Esophagus squamous epithelium (tissue), 5 donors: ENCODE measurements at regions of chr3 and their contacts with region 1.

Region 1: GRCh38 chr3:11060500-11061251 is 68.1 kb downstream of the SLC6A1 start:
- DNase-seq: no peak
- H3K4me3 ChIP-seq: peak overlapping the region in 2 of 4 donors; percentile 16 to 56
- H3K27ac ChIP-seq: no peak overlapping the region
- H3K4me1 ChIP-seq: peaks cover 0 to 18% (median 7%) of the 10 kb centered on the region in 3 donors
- H3K27me3 ChIP-seq: peaks cover 0 to 34% (median 0%) of the 10 kb centered on the region in 4 donors
- CTCF ChIP-seq: peak; percentile 55 to 94 (median 85)
- POLR2A ChIP-seq: no peak

Region 2: GRCh38 chr3:10722911-10723310 is 337.8 kb before region 1 on chr3:
- intact Hi-C with region 1: no loop called
- DNase-seq: no peak
- H3K4me3 ChIP-seq: no peak overlapping the region
- H3K27ac ChIP-seq: no peak overlapping the region
- H3K4me1 ChIP-seq: no peaks in the 10 kb centered on the region
- H3K27me3 ChIP-seq: peaks cover 0 to 50% (median 0%) of the 10 kb centered on the region in 4 donors
- CTCF ChIP-seq: no peak
- POLR2A ChIP-seq: no peak

Region 3: DNA sequence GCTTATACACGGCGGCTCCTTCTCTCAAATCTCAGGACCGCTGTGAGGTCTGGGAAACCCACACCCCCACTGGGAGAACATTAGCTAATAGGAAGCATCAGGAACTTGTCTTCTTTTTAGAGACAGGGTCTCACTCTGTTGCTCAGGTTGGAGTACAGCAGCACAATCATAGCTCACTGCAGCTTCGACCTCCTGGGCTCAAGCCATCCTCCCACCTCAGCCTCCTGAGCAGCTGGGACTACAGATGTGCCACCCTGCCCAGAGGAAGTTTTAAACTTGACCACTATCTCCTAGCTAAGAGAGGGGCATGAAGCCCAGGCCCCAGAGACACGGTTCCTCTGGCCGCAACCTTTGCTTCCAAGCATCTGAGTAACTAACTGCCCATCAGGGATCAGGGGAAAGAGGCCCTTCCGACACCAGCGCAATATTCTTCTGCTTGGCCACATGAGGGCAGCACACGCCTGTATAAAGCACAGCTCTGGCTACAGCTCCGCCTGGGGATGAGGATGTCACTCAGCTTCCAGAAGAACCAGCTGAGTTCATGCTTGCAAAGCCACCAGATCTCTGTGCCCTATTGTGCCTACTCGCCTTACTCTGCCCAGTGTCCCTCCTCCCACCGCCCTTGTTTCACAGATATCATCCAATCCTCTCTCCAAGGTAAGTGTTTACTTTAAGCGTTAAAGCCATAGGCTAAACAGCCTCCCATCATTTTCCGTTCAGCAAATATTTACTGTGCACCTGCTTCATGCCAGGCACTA is 302.2 kb before region 1 on chr3:
- intact Hi-C with region 1: loop called (anchors 5 kb)
- DNase-seq: no peak
- H3K4me3 ChIP-seq: no peak overlapping the region
- H3K27ac ChIP-seq: no peak overlapping the region
- H3K4me1 ChIP-seq: peaks cover 0 to 6% (median 0%) of the 10 kb centered on the region in 3 donors
- H3K27me3 ChIP-seq: peaks cover 0 to 94% (median 0%) of the 10 kb centered on the region in 4 donors
- CTCF ChIP-seq: peak in 5 of 6 experiments; percentile 58 to 88 (median 72)
- POLR2A ChIP-seq: no peak

Region 4: GRCh38 chr3:10945683-10946287 is 114.9 kb before region 1 on chr3:
- intact Hi-C with region 1: loop called (anchors 5 kb)
- DNase-seq: no peak
- H3K4me3 ChIP-seq: no peak overlapping the region
- H3K27ac ChIP-seq: no peak overlapping the region
- H3K4me1 ChIP-seq: peaks cover 0 to 4% (median 0%) of the 10 kb centered on the region in 3 donors
- H3K27me3 ChIP-seq: peaks cover 0 to 27% (median 0%) of the 10 kb centered on the region in 4 donors
- CTCF ChIP-seq: peak; percentile 66 to 87 (median 80)
- POLR2A ChIP-seq: no peak

Region 5: DNA sequence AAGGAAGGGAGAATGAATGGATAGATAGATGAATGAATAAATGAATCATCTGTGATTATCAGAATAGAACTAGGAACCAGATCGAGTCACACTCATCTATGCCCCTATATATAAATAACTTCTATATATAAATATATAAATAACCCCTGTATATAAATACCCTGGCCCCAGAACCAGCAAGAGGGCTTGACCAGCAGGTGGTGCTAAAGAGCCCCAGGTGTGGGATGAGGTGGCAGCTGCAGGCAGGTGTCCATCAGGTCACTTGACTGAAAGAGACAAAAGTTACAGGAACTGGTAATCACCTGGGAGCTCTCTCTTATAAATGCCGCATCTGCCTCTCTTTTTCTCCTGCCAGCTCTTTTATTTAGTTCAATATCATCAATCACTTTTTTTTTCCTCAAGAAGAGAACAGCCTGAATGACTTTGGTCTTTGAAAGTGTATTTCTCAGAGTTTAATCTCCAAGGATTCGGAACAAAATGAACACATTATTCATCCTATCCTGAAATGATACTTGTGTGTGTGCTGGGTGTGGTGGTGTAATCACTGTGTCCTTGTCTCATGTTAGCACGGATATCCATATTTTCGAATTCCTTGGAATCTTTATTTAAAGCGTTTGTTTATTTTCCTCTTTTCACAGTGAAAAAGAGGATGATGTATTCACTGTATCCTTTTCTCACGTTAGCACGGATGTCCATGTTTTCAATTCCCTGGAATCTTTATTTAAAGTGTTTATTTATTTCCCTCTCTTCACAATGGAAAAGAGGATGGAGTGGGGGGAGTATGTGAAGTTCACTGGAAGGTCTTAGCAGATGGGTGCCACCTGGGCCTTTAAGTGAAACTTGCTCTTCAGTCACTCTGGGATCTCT is 176.2 kb after region 1 on chr3:
- intact Hi-C with region 1: no loop called
- DNase-seq: no peak
- H3K4me3 ChIP-seq: no peak overlapping the region
- H3K27ac ChIP-seq: peak overlapping the region in 1 of 4 donors; percentile 2
- H3K4me1 ChIP-seq: peaks cover 0 to 17% (median 0%) of the 10 kb centered on the region in 3 donors
- H3K27me3 ChIP-seq: peaks cover 0 to 7% (median 0%) of the 10 kb centered on the region in 4 donors
- CTCF ChIP-seq: peak; percentile 69 to 81 (median 73)
- POLR2A ChIP-seq: no peak

Region 6: GRCh38 chr3:11335056-11335608 is 274.5 kb after region 1 on chr3:
- intact Hi-C with region 1: loop called (anchors 10 kb)
- DNase-seq: no peak
- H3K4me3 ChIP-seq: no peak overlapping the region
- H3K27ac ChIP-seq: no peak overlapping the region
- H3K4me1 ChIP-seq: peaks cover 0 to 3% (median 0%) of the 10 kb centered on the region in 3 donors
- H3K27me3 ChIP-seq: no peaks in the 10 kb centered on the region
- CTCF ChIP-seq: peak; percentile 32 to 87 (median 68)
- POLR2A ChIP-seq: no peak